Activated B cell treated with CpG ODN at 0.5 μM for 24 hours (primary cell): ENCODE measurements at regions of chr3 and their contacts with region 1.

Region 1: GRCh38 chr3:72310419-72311380 is 525.8 kb upstream of the PROK2 start:
- DNase-seq: peak; percentile 45
- ATAC-seq: peak; percentile 98
- H3K4me3 Mint-ChIP-seq: peak overlapping the region; percentile 74
- H3K27ac Mint-ChIP-seq: peak overlapping the region; percentile 76
- H3K4me1 Mint-ChIP-seq: peaks cover 47% of the 10 kb centered on the region
- H3K27me3 Mint-ChIP-seq: no peaks in the 10 kb centered on the region
- CTCF ChIP-seq: no peak

Region 2: GRCh38 chr3:72288955-72289691 is 21.6 kb before region 1 on chr3:
- CTCF ChIA-PET with region 1: no interaction called
- POLR2A ChIA-PET with region 1: interaction called, 3 read pairs
- intact Hi-C with region 1: loop called (anchors 2 kb)
- DNase-seq: no peak
- ATAC-seq: peak; percentile 83
- H3K4me3 Mint-ChIP-seq: peak overlapping the region; percentile 78
- H3K27ac Mint-ChIP-seq: no peak overlapping the region
- H3K4me1 Mint-ChIP-seq: peaks cover 23% of the 10 kb centered on the region
- H3K27me3 Mint-ChIP-seq: no peaks in the 10 kb centered on the region
- CTCF ChIP-seq: no peak